ENCODE measurements at regions of chr15 and their contacts with region 1.

Region 1: DNA sequence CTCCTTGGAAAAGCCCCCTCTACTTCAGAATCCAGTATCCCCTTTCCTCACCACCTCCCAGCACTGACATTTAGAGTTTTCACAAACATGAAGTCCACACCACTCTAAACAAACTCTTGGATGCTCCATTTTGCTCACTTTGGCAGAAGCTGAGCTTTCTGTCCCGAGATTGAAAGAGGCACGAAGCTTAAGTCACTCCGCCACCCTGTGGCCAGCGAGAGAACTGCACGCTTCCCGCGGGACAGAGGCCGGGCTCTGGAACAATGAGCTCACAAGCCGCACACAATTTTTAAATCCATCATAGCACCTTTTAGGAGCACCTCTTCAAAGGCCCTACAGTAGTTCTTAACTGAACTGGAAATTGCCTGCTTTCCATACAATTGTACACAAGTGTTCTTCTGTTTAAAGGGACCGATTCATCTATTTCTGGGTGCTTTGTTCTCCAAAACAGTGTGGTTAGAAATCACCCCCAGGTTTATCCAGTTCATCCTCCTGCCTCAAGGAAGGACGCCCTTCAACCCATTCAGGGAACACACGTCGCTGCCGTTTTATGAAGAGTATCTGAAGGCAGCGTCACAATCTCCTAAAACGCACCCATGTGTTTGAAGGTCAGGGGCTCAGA is 226.1 kb downstream of the VPS13C start:
- DNase-seq: peak; percentile 75
- H3K4me3 ChIP-seq: peak overlapping the region in 1 of 2 experiments; percentile 5; a peak in 1 of 4 replicates
- H3K27ac ChIP-seq: no peak overlapping the region
- H3K4me1 ChIP-seq: peaks cover 0 to 18% of the 10 kb centered on the region in 2 experiments; a peak in 1 of 4 replicates
- H3K27me3 ChIP-seq: no peaks in the 10 kb centered on the region
- CTCF ChIP-seq: peak; percentile 93
- EP300 ChIP-seq: no peak
- RAD21 ChIP-seq: peak; percentile 96

Region 2: GRCh38 chr15:61051569-61052031 is 782.6 kb before region 1 on chr15:
- CTCF ChIA-PET with region 1: interaction called, 21 read pairs
- POLR2A ChIA-PET with region 1: no interaction called
- DNase-seq: peak; percentile 61
- H3K4me3 ChIP-seq: no peak overlapping the region
- H3K27ac ChIP-seq: no peak overlapping the region
- H3K4me1 ChIP-seq: peaks cover 0 to 22% of the 10 kb centered on the region in 2 experiments; a peak in 2 of 4 replicates
- H3K27me3 ChIP-seq: no peaks in the 10 kb centered on the region
- CTCF ChIP-seq: peak; percentile 81
- EP300 ChIP-seq: no peak
- RAD21 ChIP-seq: peak; percentile 95

Region 3: GRCh38 chr15:61169904-61170695 is 664.1 kb before region 1 on chr15:
- CTCF ChIA-PET with region 1: interaction called, 35 read pairs
- POLR2A ChIA-PET with region 1: no interaction called
- DNase-seq: no peak
- H3K4me3 ChIP-seq: no peak overlapping the region
- H3K27ac ChIP-seq: no peak overlapping the region
- H3K4me1 ChIP-seq: peaks cover 7% of the 10 kb centered on the region in 2 experiments; a peak in 2 of 4 replicates
- H3K27me3 ChIP-seq: no peaks in the 10 kb centered on the region
- CTCF ChIP-seq: no peak
- EP300 ChIP-seq: no peak
- RAD21 ChIP-seq: no peak

Region 4: GRCh38 chr15:61530779-61531178 is 303.4 kb before region 1 on chr15:
- CTCF ChIA-PET with region 1: interaction called, 15 read pairs
- POLR2A ChIA-PET with region 1: no interaction called
- DNase-seq: peak; percentile 16
- H3K4me3 ChIP-seq: no peak overlapping the region
- H3K27ac ChIP-seq: no peak overlapping the region
- H3K4me1 ChIP-seq: peaks cover 0 to 9% of the 10 kb centered on the region in 2 experiments; a peak in 1 of 4 replicates
- H3K27me3 ChIP-seq: no peaks in the 10 kb centered on the region; the same call in 1 of the 2 replicates
- CTCF ChIP-seq: no peak
- EP300 ChIP-seq: no peak
- RAD21 ChIP-seq: peak; percentile 27; the same call in 1 of the 2 replicates

Region 5: GRCh38 chr15:61700803-61701202 is 133.4 kb before region 1 on chr15:
- CTCF ChIA-PET with region 1: interaction called, 11 read pairs
- POLR2A ChIA-PET with region 1: no interaction called
- DNase-seq: no peak
- H3K4me3 ChIP-seq: no peak overlapping the region
- H3K27ac ChIP-seq: no peak overlapping the region
- H3K4me1 ChIP-seq: no peaks in the 10 kb centered on the region
- H3K27me3 ChIP-seq: no peaks in the 10 kb centered on the region; the same call in 1 of the 2 replicates
- CTCF ChIP-seq: no peak
- EP300 ChIP-seq: no peak
- RAD21 ChIP-seq: no peak

Region 6: DNA sequence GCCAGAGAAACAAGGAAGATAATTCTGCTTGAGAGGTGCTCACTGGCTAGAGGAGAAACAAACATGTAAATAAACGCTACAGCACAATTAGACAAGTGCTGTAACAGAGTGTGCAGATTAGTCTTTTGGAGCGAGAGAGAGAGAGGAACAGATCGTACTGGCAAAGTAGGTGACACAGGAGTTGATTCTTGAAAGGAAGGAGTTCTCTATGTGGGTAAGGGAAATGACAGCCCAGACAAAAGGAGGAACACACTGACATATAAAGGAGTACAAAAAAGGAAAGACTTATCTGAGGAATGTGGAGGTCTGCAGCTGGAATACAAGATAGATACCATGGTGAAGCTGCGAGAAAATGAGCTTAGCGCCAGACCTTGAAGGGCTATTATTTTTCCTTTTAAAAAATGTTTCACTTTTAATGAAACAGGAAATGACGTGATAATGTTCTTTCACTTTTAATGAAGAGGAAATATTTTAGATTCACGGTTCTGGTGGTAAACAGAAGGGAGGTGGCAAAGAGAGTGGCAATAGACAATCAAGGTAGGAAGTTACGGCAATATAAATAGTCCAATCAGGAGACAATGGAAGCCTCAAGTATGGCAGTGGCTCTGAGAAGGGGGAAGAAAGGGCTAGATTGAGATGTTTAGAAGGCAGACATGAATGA is 23.1 kb after region 1 on chr15:
- CTCF ChIA-PET with region 1: interaction called, 13 read pairs
- POLR2A ChIA-PET with region 1: no interaction called
- DNase-seq: no peak
- H3K4me3 ChIP-seq: no peak overlapping the region
- H3K27ac ChIP-seq: no peak overlapping the region
- H3K4me1 ChIP-seq: no peaks in the 10 kb centered on the region
- H3K27me3 ChIP-seq: no peaks in the 10 kb centered on the region
- CTCF ChIP-seq: no peak
- EP300 ChIP-seq: no peak
- RAD21 ChIP-seq: no peak